GM12878 (cell line): ENCODE measurements at regions of chr4 and their contacts with region 1.

Region 1: GRCh38 chr4:38948551-38948950 is 80.9 kb downstream of the FAM114A1 start:
- DNase-seq: no peak
- ATAC-seq: no peak
- H3K4me3 ChIP-seq: no peak overlapping the region
- H3K27ac ChIP-seq: no peak overlapping the region
- H3K4me1 ChIP-seq: no peaks in the 10 kb centered on the region
- H3K27me3 ChIP-seq: no peaks in the 10 kb centered on the region
- CTCF ChIP-seq: no peak
- EP300 ChIP-seq: no peak
- POLR2A ChIP-seq: no peak
- RAD21 ChIP-seq: no peak

Region 2: DNA sequence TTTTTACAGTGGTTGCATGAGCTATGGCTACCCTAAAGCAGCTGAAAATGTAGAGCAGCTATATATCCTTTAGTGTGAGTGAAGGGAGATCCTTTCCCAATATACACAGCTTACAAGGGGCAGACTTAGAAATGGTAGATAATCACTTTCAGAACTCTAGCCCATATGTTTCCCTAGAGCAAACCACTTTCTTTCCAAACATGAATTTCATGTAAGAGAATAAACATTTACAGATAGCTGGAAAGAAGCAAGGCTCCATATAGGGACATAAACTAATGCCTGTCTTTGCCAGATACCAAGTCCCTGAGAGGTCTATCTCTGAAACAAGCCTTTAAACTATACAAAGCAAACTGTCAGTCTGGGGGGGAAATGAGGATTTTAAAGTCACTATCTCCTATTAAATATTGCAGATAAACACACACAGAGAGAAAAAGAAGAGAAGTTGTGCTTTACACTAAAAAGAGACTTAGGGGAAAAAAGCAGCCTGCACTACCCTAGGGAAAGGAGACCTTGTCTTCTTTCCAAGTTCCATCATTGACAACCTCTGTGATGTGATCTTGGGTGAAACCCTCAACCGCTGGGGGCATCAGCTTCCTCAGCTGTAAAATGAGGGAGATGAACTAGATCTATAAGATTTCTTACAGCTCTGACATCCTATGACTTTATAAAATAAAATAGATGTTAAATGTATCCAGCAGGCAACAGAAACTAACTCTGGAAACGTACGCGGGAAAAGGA is 10.1 kb after region 1 on chr4:
- CTCF ChIA-PET with region 1: interaction called, 3 read pairs
- POLR2A ChIA-PET with region 1: interaction called, 3 read pairs
- RAD21 ChIA-PET with region 1: interaction called, 3 read pairs
- SMC1A ChIA-PET with region 1: interaction called, 16 read pairs
- in situ Hi-C with region 1: no loop called
- intact Hi-C with region 1: no loop called
- DNase-seq: no peak
- ATAC-seq: peak; percentile 73
- H3K4me3 ChIP-seq: no peak overlapping the region
- H3K27ac ChIP-seq: no peak overlapping the region
- H3K4me1 ChIP-seq: peaks cover 6% of the 10 kb centered on the region; the same call in 1 of the 2 replicates
- H3K27me3 ChIP-seq: no peaks in the 10 kb centered on the region
- CTCF ChIP-seq: no peak
- EP300 ChIP-seq: no peak
- POLR2A ChIP-seq: no peak
- RAD21 ChIP-seq: no peak